Posterior vena cava (tissue), 2 donors: ENCODE measurements at regions of chr4 and their contacts with region 1.

Region 1: DNA sequence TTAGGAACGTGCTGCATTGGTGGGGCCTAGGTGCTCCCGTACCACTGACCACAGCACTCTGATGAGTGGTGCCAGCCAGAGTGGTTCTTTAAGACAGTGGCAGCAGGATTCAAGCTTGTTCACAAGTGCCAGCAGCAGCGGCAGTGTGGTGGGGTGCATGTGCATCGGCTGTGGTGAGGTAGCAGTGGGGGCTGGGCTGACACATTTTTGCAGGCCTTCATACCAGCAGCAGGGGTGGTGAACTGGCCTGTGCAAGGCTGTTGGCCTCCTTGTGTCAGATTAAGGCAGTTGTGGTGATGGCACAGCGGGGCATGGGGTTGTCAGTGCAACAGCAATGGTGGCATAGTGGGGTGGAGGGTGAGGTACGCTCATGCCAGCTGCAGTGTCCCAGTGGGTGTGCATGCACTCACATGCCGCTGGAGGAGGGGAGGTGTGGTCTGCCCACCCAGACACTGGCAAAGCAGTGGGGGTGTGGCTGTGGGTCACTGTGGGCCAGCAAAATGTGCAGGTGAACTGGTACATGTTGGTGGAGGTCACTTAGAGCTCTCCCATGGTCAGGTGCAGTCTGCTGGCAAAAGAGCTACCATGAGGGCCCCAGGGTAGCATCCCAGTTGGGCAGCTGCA is 131.3 kb downstream of the PABPC4L start:
- DNase-seq: no peak

Region 2: DNA sequence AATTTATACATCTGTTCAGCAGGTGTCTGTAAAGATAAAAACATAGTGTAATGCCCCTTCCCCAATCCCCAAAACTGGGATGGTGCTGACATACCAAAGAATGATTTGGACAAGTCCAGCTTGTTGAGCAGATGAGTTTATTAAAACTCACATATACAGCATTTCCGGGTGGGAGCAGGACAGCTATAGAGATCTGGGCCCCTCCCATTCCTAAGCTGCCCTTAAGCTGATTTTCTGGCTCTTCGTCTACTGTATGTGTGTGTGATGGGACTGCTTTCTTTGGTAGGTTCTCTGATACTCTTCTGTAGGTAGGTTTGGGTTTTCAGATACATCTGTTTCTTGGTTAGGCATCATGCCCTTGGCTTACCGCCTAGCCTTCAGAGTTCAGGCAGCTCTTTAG is 1624.9 kb before region 1 on chr4:
- intact Hi-C with region 1: loop called in 1 of 2 experiments (anchors 10 kb)
- DNase-seq: no peak